B cell (primary cell): ENCODE measurements at regions of chr2 and their contacts with region 1.

Region 1: GRCh38 chr2:17719562-17720371 is 33.8 kb downstream of the SMC6 start:
- DNase-seq: peak; percentile 55
- ATAC-seq: peak; percentile 49
- H3K4me3 ChIP-seq: no peak overlapping the region
- H3K4me3 Mint-ChIP-seq: no peak overlapping the region
- H3K27ac ChIP-seq: peak overlapping the region in 1 of 2 donors; percentile 21
- H3K27ac Mint-ChIP-seq: peak overlapping the region; percentile 54
- H3K4me1 ChIP-seq: no peaks in the 10 kb centered on the region
- H3K4me1 Mint-ChIP-seq: peaks cover 6% of the 10 kb centered on the region
- H3K27me3 ChIP-seq: no peaks in the 10 kb centered on the region
- H3K27me3 Mint-ChIP-seq: no peaks in the 10 kb centered on the region
- CTCF ChIP-seq: peak; percentile 96

Region 2: GRCh38 chr2:17646081-17646554 is 73.6 kb before region 1 on chr2:
- CTCF ChIA-PET with region 1: no interaction called
- POLR2A ChIA-PET with region 1: no interaction called
- intact Hi-C with region 1: no loop called
- DNase-seq: peak; percentile 62
- ATAC-seq: peak; percentile 56
- H3K4me3 ChIP-seq: no peak overlapping the region
- H3K4me3 Mint-ChIP-seq: no peak overlapping the region
- H3K27ac ChIP-seq: no peak overlapping the region
- H3K27ac Mint-ChIP-seq: no peak overlapping the region
- H3K4me1 ChIP-seq: peaks cover 0 to 3% of the 10 kb centered on the region in 2 donors
- H3K4me1 Mint-ChIP-seq: peaks cover 9% of the 10 kb centered on the region
- H3K27me3 ChIP-seq: no peaks in the 10 kb centered on the region
- H3K27me3 Mint-ChIP-seq: no peaks in the 10 kb centered on the region
- CTCF ChIP-seq: peak; percentile 80

Region 3: DNA sequence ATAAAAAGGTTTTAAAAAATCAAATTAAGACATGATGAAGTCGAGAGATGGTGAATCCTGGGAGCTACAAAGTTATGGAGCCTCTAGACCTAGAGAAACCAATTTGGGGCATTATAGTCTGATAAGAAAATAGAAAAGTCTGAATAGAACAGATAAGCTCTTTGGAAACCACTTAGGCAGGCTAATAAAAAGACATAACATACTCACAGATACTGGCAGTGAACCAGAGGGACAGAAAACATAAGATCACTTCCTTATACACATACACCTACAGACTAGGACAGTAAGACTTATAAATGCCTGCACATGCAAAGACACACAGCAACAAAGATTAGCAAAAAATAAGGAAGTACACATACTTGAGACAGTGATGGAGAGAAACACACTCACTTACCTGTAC is 13.8 kb after region 1 on chr2:
- CTCF ChIA-PET with region 1: interaction called, 41 read pairs
- POLR2A ChIA-PET with region 1: no interaction called
- intact Hi-C with region 1: no loop called
- DNase-seq: no peak
- ATAC-seq: no peak
- H3K4me3 ChIP-seq: no peak overlapping the region
- H3K4me3 Mint-ChIP-seq: no peak overlapping the region
- H3K27ac ChIP-seq: peak overlapping the region in 1 of 2 donors; percentile 24
- H3K27ac Mint-ChIP-seq: peak overlapping the region; percentile 1
- H3K4me1 ChIP-seq: no peaks in the 10 kb centered on the region
- H3K4me1 Mint-ChIP-seq: peaks cover 6% of the 10 kb centered on the region
- H3K27me3 ChIP-seq: no peaks in the 10 kb centered on the region
- H3K27me3 Mint-ChIP-seq: no peaks in the 10 kb centered on the region
- CTCF ChIP-seq: no peak

Region 4: DNA sequence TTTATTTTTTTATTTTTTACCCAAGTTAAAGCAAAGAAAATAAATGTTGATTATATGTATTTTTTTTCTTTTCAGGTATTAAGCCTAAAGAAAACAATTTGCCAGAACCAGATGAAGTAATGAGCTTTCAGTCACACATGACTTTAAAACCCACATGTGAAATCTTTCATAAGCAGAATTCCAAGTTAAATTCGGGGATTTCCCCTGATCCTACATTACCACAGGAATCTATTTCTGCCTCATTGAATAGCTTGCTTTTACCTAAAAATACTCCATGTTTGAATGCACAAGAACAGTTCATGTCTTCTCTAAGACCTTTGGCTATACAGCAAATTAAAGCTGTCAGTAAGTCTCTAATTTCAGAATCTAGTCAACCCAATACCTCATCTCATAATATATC is 60.8 kb after region 1 on chr2:
- CTCF ChIA-PET with region 1: interaction called, 10 read pairs
- POLR2A ChIA-PET with region 1: no interaction called
- intact Hi-C with region 1: no loop called
- DNase-seq: no peak
- ATAC-seq: no peak
- H3K4me3 ChIP-seq: no peak overlapping the region
- H3K4me3 Mint-ChIP-seq: no peak overlapping the region
- H3K27ac ChIP-seq: no peak overlapping the region
- H3K27ac Mint-ChIP-seq: no peak overlapping the region
- H3K4me1 ChIP-seq: no peaks in the 10 kb centered on the region
- H3K4me1 Mint-ChIP-seq: no peaks in the 10 kb centered on the region
- H3K27me3 ChIP-seq: no peaks in the 10 kb centered on the region
- H3K27me3 Mint-ChIP-seq: no peaks in the 10 kb centered on the region
- CTCF ChIP-seq: no peak

Region 5: GRCh38 chr2:17830053-17831034 is 110.6 kb after region 1 on chr2:
- CTCF ChIA-PET with region 1: interaction called, 155 read pairs
- POLR2A ChIA-PET with region 1: no interaction called
- intact Hi-C with region 1: loop called (anchors 1 kb)
- DNase-seq: peak; percentile 76
- ATAC-seq: peak; percentile 91
- H3K4me3 ChIP-seq: peak overlapping the region in 4 of 5 experiments; percentile 13 to 59 (median 33)
- H3K4me3 Mint-ChIP-seq: peak overlapping the region; percentile 70
- H3K27ac ChIP-seq: no peak overlapping the region
- H3K27ac Mint-ChIP-seq: peak overlapping the region; percentile 50
- H3K4me1 ChIP-seq: peaks cover 17 to 20% of the 10 kb centered on the region in 2 donors
- H3K4me1 Mint-ChIP-seq: peaks cover 34% of the 10 kb centered on the region
- H3K27me3 ChIP-seq: peaks cover 0 to 3% (median 0%) of the 10 kb centered on the region in 4 experiments
- H3K27me3 Mint-ChIP-seq: no peaks in the 10 kb centered on the region
- CTCF ChIP-seq: peak; percentile 97

Region 6: DNA sequence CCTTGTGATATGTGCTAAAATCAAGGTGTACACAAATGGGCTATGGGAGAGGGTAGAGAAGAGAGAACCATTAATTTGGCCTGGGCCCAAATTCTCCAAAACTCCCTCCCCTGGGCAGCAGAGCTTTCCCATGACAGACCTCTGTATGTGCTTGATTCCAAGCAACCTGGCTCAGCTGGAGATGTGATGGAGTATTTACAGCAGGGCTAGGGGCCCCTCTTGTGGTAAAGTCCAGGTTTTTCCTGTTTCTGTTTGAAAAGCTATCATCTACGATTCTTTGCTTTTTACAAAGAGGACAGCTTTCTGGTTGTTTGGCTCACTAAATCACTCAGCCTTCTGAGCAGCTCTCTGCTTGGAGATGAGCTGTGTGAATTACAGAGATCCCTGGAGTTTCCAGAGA is 199.0 kb after region 1 on chr2:
- CTCF ChIA-PET with region 1: interaction called, 4 read pairs
- POLR2A ChIA-PET with region 1: no interaction called
- intact Hi-C with region 1: loop called (anchors 2 kb)
- DNase-seq: no peak
- ATAC-seq: no peak
- H3K4me3 ChIP-seq: no peak overlapping the region
- H3K4me3 Mint-ChIP-seq: no peak overlapping the region
- H3K27ac ChIP-seq: no peak overlapping the region
- H3K27ac Mint-ChIP-seq: no peak overlapping the region
- H3K4me1 ChIP-seq: no peaks in the 10 kb centered on the region
- H3K4me1 Mint-ChIP-seq: no peaks in the 10 kb centered on the region
- H3K27me3 ChIP-seq: peaks cover 0 to 5% (median 0%) of the 10 kb centered on the region in 4 experiments
- H3K27me3 Mint-ChIP-seq: peaks cover 16% of the 10 kb centered on the region
- CTCF ChIP-seq: no peak

Region 7: GRCh38 chr2:18378020-18378653 is 658.4 kb after region 1 on chr2:
- CTCF ChIA-PET with region 1: no interaction called
- POLR2A ChIA-PET with region 1: no interaction called
- intact Hi-C with region 1: loop called (anchors 5 kb)
- DNase-seq: peak; percentile 33
- ATAC-seq: no peak
- H3K4me3 ChIP-seq: no peak overlapping the region
- H3K4me3 Mint-ChIP-seq: no peak overlapping the region
- H3K27ac ChIP-seq: no peak overlapping the region
- H3K27ac Mint-ChIP-seq: no peak overlapping the region
- H3K4me1 ChIP-seq: no peaks in the 10 kb centered on the region
- H3K4me1 Mint-ChIP-seq: no peaks in the 10 kb centered on the region
- H3K27me3 ChIP-seq: peaks cover 0 to 8% (median 2%) of the 10 kb centered on the region in 4 experiments
- H3K27me3 Mint-ChIP-seq: peaks cover 24% of the 10 kb centered on the region
- CTCF ChIP-seq: peak; percentile 85